Psoas muscle (tissue), 8 donors: ENCODE measurements at regions of chr4 and their contacts with region 1.

Region 1: GRCh38 chr4:3302173-3302785 is 9.5 kb downstream of the RGS12 start:
- DNase-seq: no peak
- ATAC-seq: no peak
- H3K4me3 ChIP-seq: no peak overlapping the region
- H3K27ac ChIP-seq: no peak overlapping the region
- H3K4me1 ChIP-seq: peaks cover 39% of the 10 kb centered on the region
- H3K27me3 ChIP-seq: no peaks in the 10 kb centered on the region
- CTCF ChIP-seq: no peak

Region 2: GRCh38 chr4:3136453-3136852 is 165.8 kb before region 1 on chr4:
- intact Hi-C with region 1: no loop called
- DNase-seq: no peak
- ATAC-seq: peak in 1 of 4 donors; percentile 71
- H3K4me3 ChIP-seq: no peak overlapping the region
- H3K27ac ChIP-seq: no peak overlapping the region
- H3K4me1 ChIP-seq: no peaks in the 10 kb centered on the region
- H3K27me3 ChIP-seq: no peaks in the 10 kb centered on the region
- CTCF ChIP-seq: peak; percentile 44

Region 3: DNA sequence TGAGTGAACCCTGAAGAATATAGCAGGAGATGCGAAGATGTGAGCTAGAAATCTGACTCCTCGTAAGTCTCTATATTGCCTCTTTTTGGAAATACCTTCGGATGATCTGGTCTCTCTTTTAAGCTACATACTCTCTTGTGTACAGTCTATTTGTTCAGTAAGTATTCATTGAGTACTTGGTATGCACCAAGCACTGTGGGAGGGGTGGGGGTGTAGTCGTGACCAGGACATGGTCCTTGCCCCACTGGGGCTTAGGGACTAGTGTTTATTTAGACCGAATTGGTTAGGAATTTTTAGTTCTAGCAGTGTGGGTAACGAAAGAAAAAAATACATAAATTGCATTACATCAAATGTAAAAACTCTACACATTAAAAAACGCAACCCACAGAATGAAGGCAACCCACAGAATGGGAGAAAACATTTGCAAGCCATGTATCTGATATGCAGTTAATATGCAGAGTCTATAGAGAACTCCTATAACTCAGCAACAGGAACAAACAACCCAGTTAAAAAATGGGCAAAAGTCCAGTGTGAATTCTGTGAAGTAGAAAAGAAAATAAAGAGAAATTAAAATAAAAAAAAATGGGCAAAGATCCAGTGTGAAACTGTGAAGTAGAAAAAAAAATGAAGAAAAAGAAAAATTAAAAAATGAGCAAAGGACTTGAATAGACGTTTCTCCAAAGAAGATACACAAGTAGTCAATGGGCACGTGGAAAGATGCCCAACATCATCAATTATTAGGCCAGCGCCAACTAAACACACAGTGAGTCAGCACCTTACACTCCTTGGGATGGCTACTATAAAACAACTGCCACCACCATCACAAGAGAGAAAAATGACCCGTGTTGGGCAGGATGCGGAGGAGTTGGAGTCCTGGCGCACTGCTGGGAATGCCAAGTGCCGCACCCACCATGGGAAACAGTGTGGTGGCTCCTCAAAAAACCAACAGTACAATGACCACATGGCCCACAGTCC is 34.4 kb after region 1 on chr4:
- intact Hi-C with region 1: loop called in 1 of 2 experiments (anchors 1 kb)
- DNase-seq: no peak
- ATAC-seq: no peak
- H3K4me3 ChIP-seq: no peak overlapping the region
- H3K27ac ChIP-seq: no peak overlapping the region
- H3K4me1 ChIP-seq: peaks cover 6% of the 10 kb centered on the region
- H3K27me3 ChIP-seq: no peaks in the 10 kb centered on the region
- CTCF ChIP-seq: no peak